B cell (primary cell): ENCODE measurements at regions of chr12 and their contacts with region 1.

Region 1: GRCh38 chr12:67689385-67689784 is 40.8 kb downstream of the DYRK2 start:
- DNase-seq: no peak
- ATAC-seq: no peak
- H3K4me3 ChIP-seq: no peak overlapping the region
- H3K4me3 Mint-ChIP-seq: no peak overlapping the region
- H3K27ac ChIP-seq: no peak overlapping the region
- H3K27ac Mint-ChIP-seq: no peak overlapping the region
- H3K4me1 ChIP-seq: peaks cover 12 to 21% of the 10 kb centered on the region in 2 donors
- H3K4me1 Mint-ChIP-seq: peaks cover 17% of the 10 kb centered on the region
- H3K27me3 ChIP-seq: peaks cover 0 to 6% (median 4%) of the 10 kb centered on the region in 4 experiments
- H3K27me3 Mint-ChIP-seq: no peaks in the 10 kb centered on the region
- CTCF ChIP-seq: no peak

Region 2: GRCh38 chr12:67562513-67563287 is 126.7 kb before region 1 on chr12:
- CTCF ChIA-PET with region 1: no interaction called
- POLR2A ChIA-PET with region 1: no interaction called
- intact Hi-C with region 1: no loop called
- DNase-seq: no peak
- ATAC-seq: no peak
- H3K4me3 ChIP-seq: no peak overlapping the region
- H3K4me3 Mint-ChIP-seq: no peak overlapping the region
- H3K27ac ChIP-seq: no peak overlapping the region
- H3K27ac Mint-ChIP-seq: no peak overlapping the region
- H3K4me1 ChIP-seq: no peaks in the 10 kb centered on the region
- H3K4me1 Mint-ChIP-seq: no peaks in the 10 kb centered on the region
- H3K27me3 ChIP-seq: no peaks in the 10 kb centered on the region
- H3K27me3 Mint-ChIP-seq: peaks cover 12% of the 10 kb centered on the region
- CTCF ChIP-seq: no peak

Region 3: DNA sequence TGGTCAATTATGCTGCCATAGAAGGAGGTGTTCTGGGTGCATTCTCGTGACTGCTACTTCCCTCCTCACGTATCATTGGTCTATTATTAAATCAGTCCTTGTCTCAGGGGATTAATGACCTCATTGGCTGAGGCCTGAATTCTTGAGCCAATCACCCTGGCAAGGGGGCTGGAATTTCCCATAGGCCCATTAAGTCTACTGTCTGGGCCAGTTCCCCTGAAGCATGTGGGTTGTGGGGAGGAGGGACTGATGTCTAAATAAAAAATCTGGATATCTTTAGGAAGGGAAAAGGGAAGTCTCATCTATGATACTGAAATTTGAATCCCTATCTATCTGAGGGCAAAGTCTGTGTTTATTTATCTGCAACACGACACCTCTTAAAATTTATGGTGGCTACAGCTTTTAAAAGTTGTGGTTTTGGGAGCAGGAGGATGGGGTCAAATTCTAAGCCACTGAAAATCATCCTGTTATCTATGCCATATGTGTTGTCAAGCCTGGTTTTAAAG is 31.0 kb after region 1 on chr12:
- CTCF ChIA-PET with region 1: no interaction called
- POLR2A ChIA-PET with region 1: no interaction called
- intact Hi-C with region 1: loop called (anchors 5 kb)
- DNase-seq: no peak
- ATAC-seq: no peak
- H3K4me3 ChIP-seq: no peak overlapping the region
- H3K4me3 Mint-ChIP-seq: no peak overlapping the region
- H3K27ac ChIP-seq: no peak overlapping the region
- H3K27ac Mint-ChIP-seq: no peak overlapping the region
- H3K4me1 ChIP-seq: no peaks in the 10 kb centered on the region
- H3K4me1 Mint-ChIP-seq: no peaks in the 10 kb centered on the region
- H3K27me3 ChIP-seq: no peaks in the 10 kb centered on the region
- H3K27me3 Mint-ChIP-seq: peaks cover 9% of the 10 kb centered on the region
- CTCF ChIP-seq: no peak

Region 4: GRCh38 chr12:67758119-67758518 is 68.7 kb after region 1 on chr12:
- CTCF ChIA-PET with region 1: no interaction called
- POLR2A ChIA-PET with region 1: no interaction called
- intact Hi-C with region 1: no loop called
- DNase-seq: peak; percentile 81
- ATAC-seq: peak; percentile 96
- H3K4me3 ChIP-seq: no peak overlapping the region
- H3K4me3 Mint-ChIP-seq: no peak overlapping the region
- H3K27ac ChIP-seq: no peak overlapping the region
- H3K27ac Mint-ChIP-seq: peak overlapping the region; percentile 11
- H3K4me1 ChIP-seq: peaks cover 23 to 30% of the 10 kb centered on the region in 2 donors
- H3K4me1 Mint-ChIP-seq: peaks cover 28% of the 10 kb centered on the region
- H3K27me3 ChIP-seq: no peaks in the 10 kb centered on the region
- H3K27me3 Mint-ChIP-seq: no peaks in the 10 kb centered on the region
- CTCF ChIP-seq: no peak